OCI-LY7 (cell line): ENCODE measurements at regions of chr10 and their contacts with region 1.

Region 1: GRCh38 chr10:114492351-114493037 is 88.2 kb upstream of the AFAP1L2 start:
- DNase-seq: peak; percentile 78
- H3K4me3 ChIP-seq: peak overlapping the region; percentile 50
- H3K27ac ChIP-seq: peak overlapping the region; percentile 97
- H3K4me1 ChIP-seq: peaks cover 94% of the 10 kb centered on the region
- CTCF ChIP-seq: no peak

Region 2: GRCh38 chr10:114477285-114477684 is 15.2 kb before region 1 on chr10:
- CTCF ChIA-PET with region 1: no interaction called
- POLR2A ChIA-PET with region 1: interaction called, 12 read pairs
- intact Hi-C with region 1: no loop called
- DNase-seq: no peak
- H3K4me3 ChIP-seq: no peak overlapping the region
- H3K27ac ChIP-seq: no peak overlapping the region
- H3K4me1 ChIP-seq: peaks cover 15% of the 10 kb centered on the region
- CTCF ChIP-seq: no peak

Region 3: DNA sequence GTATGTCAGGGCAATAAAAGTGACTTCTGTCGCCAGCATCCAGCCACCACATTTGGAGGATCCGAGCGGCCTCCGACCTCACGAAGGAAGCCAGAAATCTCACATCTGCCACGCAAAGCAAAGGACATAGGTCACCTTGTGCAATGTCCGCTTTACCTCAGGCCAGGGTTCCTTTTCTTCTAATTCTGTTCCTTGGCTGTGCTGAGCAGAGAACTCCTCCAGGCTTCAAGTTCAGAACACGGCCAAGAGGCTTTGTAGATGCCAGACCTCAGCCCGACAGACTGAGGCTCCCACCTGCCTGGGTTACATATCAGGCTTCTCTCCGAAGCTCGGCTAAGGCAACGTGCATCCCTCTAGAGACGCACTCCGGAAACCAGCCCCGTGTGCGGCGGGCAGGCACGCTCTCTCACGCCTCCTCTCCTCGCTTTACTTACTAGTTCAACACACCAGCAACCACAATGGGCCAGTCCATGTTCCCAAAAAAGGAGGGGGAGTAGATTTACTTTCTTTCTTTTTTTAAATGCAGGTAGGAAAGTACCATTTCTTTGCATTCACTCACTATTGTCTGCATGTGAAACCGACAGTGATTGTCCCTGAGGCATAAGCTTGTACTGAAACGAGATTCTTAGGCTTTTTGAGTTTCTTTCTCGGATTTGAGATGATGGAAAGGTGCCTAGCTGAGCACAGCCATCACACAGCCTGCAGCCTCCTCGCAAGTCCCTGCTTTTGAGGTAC is 34.2 kb after region 1 on chr10:
- CTCF ChIA-PET with region 1: interaction called, 14 read pairs
- POLR2A ChIA-PET with region 1: interaction called, 464 read pairs
- intact Hi-C with region 1: no loop called
- DNase-seq: peak; percentile 98
- H3K4me3 ChIP-seq: peak overlapping the region; percentile 89
- H3K27ac ChIP-seq: peak overlapping the region; percentile 91
- H3K4me1 ChIP-seq: peaks cover 35% of the 10 kb centered on the region
- CTCF ChIP-seq: no peak

Region 4: GRCh38 chr10:114663626-114664025 is 171.1 kb after region 1 on chr10:
- CTCF ChIA-PET with region 1: no interaction called
- POLR2A ChIA-PET with region 1: no interaction called
- intact Hi-C with region 1: no loop called
- DNase-seq: no peak
- H3K4me3 ChIP-seq: no peak overlapping the region
- H3K27ac ChIP-seq: no peak overlapping the region
- H3K4me1 ChIP-seq: no peaks in the 10 kb centered on the region
- CTCF ChIP-seq: no peak